ENCODE measurements at regions of chr4 and their contacts with region 1.

Region 1: GRCh38 chr4:37891260-37892159 is 626 bp downstream of the TBC1D1 start:
- DNase-seq: peak; percentile 79

Region 2: GRCh38 chr4:37675587-37676290 is 215.8 kb before region 1 on chr4:
- intact Hi-C with region 1: loop called (anchors 10 kb)
- DNase-seq: no peak

Region 3: GRCh38 chr4:37802068-37802666 is 89.3 kb before region 1 on chr4:
- intact Hi-C with region 1: loop called (anchors 1 kb)
- DNase-seq: no peak

Region 4: GRCh38 chr4:37826295-37827029 is 65.0 kb before region 1 on chr4 and contains the start of gene PGM2:
- intact Hi-C with region 1: loop called (anchors 2 kb)
- DNase-seq: peak; percentile 97
- total RNA-seq, gene PGM2: 9.5 TPM

Region 5: GRCh38 chr4:37908488-37909331 is 17.2 kb after region 1 on chr4:
- intact Hi-C with region 1: loop called (anchors 2 kb)
- DNase-seq: no peak

Region 6: GRCh38 chr4:37977471-37978247 is 86.1 kb after region 1 on chr4:
- intact Hi-C with region 1: loop called (anchors 2 kb)
- DNase-seq: peak; percentile 90

Region 7: DNA sequence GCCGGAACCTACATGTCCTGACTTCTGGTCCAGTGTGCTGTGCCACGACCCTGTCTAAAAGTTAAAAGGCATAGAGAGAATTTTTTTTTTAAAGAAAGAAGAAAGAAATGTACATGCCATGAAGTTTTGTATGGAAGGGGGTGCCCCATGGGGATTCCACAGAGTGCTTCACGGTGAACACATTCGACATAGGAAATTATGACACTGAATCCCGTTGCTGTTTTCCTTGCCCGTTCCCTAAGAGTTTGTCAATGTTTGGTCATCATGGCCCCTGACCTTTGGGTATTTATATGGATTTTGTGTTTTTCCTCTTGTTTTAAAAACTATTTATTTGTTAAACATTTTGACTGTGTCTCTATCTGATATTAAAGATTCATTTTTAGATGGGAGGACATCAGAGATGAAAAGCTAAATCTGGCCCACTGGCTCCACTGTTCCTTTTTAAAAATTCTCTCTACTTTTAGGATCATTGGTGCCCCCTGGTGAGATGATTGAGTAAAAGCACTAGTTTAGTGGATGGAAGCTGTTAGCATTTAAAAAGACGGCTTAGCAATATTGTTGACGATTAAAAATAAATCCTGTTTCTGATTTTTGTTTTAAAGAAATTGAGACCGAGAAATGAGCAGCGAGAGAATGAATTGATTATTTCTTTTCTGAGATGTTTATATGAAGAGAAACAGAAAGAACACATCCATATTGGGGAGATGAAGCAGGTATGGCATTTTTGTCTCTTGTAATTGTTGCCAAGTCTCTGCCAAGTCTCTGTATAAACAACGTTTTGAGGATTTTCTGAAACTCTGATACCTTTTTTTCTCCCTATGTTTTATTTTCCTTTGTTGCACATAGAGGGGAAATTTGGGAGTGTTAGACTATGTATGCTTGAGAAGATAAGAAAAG is 143.7 kb after region 1 on chr4:
- intact Hi-C with region 1: loop called (anchors 5 kb)
- DNase-seq: no peak

Region 8: DNA sequence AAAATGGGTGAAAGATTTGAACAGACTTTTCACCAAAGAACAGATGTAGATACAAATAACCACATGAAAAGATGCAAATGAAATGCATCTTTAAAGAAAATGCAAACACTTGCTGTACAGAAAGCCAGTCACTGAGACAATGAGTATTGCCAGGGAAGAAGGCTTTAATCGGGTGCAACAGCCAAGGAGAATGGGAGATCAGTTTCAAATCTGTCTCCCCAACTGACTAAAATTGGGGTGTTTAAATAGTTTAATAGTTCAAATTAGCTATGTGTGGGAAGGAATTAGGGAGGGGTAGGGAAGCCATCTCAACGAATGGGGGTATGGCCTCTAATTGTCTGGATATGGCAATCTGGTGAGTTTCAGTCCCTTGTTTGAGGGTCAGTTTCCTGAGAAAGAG is 364.1 kb after region 1 on chr4:
- intact Hi-C with region 1: no loop called
- DNase-seq: no peak